WTC11 (cell line): ENCODE measurements at regions of chr2 and their contacts with region 1.

Region 1: GRCh38 chr2:130797493-130798435 is 39.0 kb upstream of the ARHGEF4 start:
- DNase-seq: peak; percentile 94
- ATAC-seq: peak; percentile 76
- H3K4me3 Mint-ChIP-seq: peak overlapping the region; percentile 76
- H3K27ac Mint-ChIP-seq: no peak overlapping the region
- H3K4me1 Mint-ChIP-seq: peaks cover 20% of the 10 kb centered on the region
- H3K27me3 Mint-ChIP-seq: peaks cover 20% of the 10 kb centered on the region
- CTCF ChIP-seq: peak; percentile 82

Region 2: DNA sequence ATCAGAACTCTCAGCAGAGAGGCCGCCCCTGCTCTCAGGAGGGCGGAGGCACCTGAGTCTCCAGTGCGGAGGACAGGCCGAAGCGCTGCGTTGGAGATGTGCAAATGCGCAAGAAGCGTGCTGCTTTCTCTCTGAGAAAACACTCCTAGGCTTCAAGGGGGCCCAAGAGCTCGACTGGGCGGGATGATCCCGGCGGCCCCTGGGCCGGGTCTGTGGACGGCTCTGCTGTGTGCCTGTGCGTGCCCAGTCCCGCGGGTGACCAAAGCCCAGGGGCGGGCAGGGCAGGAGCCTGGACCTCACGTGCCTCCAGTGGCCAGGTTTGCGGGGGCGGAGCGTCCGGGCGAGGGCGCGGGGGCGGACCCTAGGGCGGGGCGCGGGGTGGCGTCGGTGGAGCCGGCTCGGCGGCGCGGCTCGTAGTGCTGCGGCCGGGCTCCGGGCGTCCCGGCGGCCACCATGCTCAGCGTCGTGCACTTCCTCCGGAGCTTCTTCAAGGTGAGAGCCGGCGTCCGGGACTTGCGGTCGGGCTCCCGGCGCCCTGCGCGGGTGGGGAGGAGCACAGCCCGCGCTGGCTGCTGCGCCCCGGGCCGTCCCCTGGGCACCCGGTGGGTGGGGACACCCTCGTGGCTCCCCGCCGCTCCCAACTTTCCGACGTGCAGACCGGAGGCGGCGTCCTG is 38.9 kb after region 1 on chr2 and contains the start of gene ARHGEF4:
- CTCF ChIA-PET with region 1: interaction called, 11 read pairs
- POLR2A ChIA-PET with region 1: no interaction called
- DNase-seq: peak; percentile 82
- ATAC-seq: peak; percentile 88
- H3K4me3 Mint-ChIP-seq: peak within 1 kb of the TSS; percentile 59
- H3K27ac Mint-ChIP-seq: no peak within 1 kb of the TSS
- H3K4me1 Mint-ChIP-seq: 0 out of 2 replicates have a peak, but pooled peaks cover 7% of the 10 kb centered on the region
- H3K27me3 Mint-ChIP-seq: peaks cover 38% of the 10 kb centered on the region
- CTCF ChIP-seq: no peak
- total RNA-seq, gene ARHGEF4: 18.1 to 21.8 TPM (median 19.5 TPM) in 3 replicates

Region 3: GRCh38 chr2:130873700-130874346 is 76.1 kb after region 1 on chr2:
- CTCF ChIA-PET with region 1: interaction called, 48 read pairs
- POLR2A ChIA-PET with region 1: no interaction called
- DNase-seq: peak; percentile 77
- ATAC-seq: peak; percentile 85
- H3K4me3 Mint-ChIP-seq: no peak overlapping the region
- H3K27ac Mint-ChIP-seq: no peak overlapping the region
- H3K4me1 Mint-ChIP-seq: no peaks in the 10 kb centered on the region
- H3K27me3 Mint-ChIP-seq: no peaks in the 10 kb centered on the region
- CTCF ChIP-seq: peak; percentile 34; the same call in 1 of the 2 replicates

Region 4: DNA sequence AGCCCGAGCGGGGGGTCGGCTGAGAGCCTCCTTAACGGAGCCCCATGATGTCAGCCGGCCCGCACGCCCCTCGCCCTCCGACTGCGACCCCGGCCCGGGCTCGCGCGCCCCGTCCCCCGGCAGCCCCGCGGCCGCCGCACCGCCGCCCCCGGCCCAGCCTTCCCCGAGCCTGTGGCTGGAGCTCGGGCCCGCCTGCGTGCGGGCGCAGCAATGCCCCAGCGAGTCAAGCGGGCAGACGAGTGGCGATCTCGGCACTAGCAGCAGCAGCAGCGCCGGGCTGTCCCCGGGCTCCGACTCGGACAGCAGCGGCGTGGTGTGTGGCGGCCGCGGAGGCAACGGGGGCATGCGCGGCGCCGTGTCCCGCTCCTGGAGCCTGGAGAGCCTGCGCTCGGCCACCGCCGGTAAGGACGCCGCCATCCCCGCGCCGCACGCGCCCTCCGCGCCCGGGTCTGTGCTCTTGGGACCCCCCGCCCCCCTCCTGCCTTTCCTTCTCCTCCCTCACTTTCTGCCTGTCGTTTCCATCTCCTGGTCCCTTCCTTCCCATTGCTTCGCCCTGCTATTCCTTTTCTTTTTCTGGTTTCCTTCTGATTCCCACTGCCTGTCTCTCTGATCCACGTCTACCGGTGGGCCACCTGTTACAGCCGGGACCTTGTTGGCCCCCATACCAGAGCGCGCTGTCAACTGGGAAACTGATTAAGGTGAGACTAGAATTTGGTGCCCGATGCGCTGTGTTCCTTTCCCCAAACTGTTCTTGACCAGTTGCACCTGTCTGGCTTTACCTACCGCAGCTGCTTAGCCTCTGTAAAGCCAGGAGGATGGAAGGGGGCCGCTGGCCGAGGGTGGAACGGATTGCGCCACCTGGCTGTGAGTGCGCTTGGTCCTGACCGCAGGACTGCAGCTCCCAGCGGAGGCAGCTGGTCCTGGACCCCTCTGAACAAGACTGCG is 166.4 kb after region 1 on chr2:
- CTCF ChIA-PET with region 1: interaction called, 35 read pairs
- POLR2A ChIA-PET with region 1: no interaction called
- DNase-seq: peak; percentile 83
- ATAC-seq: peak; percentile 81
- H3K4me3 Mint-ChIP-seq: peak overlapping the region; percentile 77
- H3K27ac Mint-ChIP-seq: no peak overlapping the region
- H3K4me1 Mint-ChIP-seq: peaks cover 46% of the 10 kb centered on the region
- H3K27me3 Mint-ChIP-seq: peaks cover 57% of the 10 kb centered on the region
- CTCF ChIP-seq: no peak